ENCODE measurements at regions of chr10 and their contacts with region 1.

Region 1: DNA sequence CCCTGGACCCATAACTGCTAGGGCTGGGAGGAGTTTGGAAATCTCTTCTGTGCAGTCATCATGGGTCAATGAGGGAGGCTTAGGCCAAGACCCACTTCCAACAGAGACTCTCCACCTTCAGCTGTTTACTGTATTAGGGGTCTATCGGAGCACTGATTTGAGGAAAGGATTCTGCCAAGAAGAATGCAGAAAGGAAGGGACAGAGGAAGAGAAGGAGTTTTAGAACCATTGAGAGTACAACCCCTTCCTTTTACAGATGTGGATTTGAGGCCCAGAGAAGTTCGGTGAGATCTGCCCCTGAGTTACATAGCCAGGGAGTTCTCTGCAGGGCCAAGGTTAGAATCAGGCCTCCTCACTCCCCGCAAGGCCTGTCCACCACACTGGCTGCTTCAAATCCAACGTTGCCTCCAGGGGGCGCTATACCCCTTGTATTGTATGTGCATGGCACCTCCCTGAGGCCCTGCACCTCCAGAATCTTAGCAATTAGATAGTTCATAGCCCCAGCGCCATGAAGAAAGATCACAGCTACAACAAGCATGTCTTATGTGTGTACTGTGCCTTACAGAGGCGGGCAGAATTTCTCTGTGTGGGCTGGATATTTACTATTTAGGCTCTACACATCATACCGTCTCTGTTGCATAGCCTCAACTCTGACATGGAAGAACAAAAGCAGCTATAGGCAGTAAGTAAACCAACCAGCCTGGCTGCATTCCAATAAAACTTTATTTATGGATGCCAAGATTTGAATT is 246.8 kb downstream of the SKIDA1 start:
- DNase-seq: peak; percentile 93

Region 2: DNA sequence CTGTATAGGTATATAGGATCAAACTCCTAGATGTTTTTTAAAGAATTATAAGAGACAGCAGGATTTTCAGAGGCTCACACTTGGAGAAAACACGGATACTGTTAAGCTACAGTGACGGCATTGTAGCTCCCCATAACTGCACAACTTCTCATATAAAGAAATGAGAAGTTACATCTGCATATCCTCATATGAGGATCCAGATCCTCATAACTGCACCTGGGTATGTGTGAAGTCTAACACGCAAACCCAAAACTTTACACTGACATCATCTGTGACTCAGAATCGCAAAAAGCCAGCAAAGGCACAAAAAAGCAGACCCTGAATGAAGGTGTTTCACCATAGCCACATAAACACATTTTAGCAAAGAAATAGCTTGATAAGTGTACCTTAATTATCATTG is 415.7 kb before region 1 on chr10:
- intact Hi-C with region 1: loop called (anchors 10 kb)
- DNase-seq: no peak

Region 3: DNA sequence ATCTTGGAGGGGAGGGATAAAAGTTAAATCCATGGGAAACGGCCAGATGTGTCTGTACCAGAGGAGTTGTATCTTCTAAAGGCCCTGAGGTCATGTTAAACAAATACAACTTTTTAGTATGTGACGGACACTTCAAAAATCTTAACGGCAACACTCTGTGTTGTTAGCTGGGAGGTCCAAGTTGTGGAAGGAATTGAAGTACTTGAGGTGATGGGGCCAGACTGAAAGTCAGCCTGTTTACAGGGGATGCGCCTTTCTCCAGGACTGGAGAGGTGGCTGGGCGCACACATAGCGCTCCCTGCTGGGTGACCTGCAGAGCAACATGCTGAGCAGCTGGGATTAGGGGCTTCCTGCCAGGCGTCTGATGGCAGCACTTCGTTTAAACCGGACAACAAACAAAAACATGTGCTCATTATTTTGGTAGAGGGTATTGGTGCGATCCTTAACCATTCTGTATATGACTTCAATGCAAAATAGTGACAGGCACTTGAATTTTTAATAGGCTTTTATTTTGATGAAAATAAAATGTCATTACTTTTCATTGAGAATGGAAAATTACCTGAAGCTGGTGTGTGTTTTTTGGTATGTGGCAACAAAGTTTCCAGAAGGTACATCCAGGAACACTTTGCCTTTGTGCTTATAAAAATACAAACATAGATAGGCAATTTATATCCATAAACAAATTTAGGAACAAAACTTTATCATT is 453.6 kb after region 1 on chr10:
- intact Hi-C with region 1: loop called (anchors 2 kb)
- DNase-seq: no peak

Measured in cardiac septum (tissue), 1 donor.